Activated CD4-positive, alpha-beta T cell treated with anti-CD3 and anti-CD28 coated beads for 36 hours (primary cell): ENCODE measurements at regions of chr1 and their contacts with region 1.

Region 1: GRCh38 chr1:101282314-101283038 is 45.7 kb downstream of the S1PR1 start:
- DNase-seq: no peak
- ATAC-seq: no peak
- H3K4me3 Mint-ChIP-seq: no peak overlapping the region
- H3K27ac Mint-ChIP-seq: peak overlapping the region; percentile 95
- H3K4me1 Mint-ChIP-seq: peaks cover 93% of the 10 kb centered on the region
- H3K27me3 Mint-ChIP-seq: no peaks in the 10 kb centered on the region

Region 2: DNA sequence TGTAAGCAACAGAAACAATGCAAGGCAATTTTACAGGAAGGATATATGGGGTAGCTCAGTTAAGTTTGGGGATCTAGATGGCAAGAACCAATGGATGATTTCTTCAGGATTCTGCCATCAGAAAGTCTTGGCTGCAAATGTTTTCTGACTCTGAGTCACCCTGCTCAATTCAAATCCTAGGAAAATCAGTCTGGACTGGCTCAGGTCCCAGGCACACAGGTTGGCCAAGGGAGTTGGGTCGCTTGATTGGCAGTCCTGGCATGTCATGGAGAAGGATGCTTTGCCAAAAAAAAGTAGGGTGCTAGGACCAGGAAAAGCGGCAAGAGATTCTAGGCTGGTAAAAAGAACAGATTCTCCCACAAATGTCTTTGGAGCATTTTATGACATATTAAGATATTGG is 74.6 kb before region 1 on chr1:
- CTCF ChIA-PET with region 1: no interaction called
- POLR2A ChIA-PET with region 1: no interaction called
- intact Hi-C with region 1: no loop called
- DNase-seq: no peak
- ATAC-seq: no peak
- H3K4me3 Mint-ChIP-seq: no peak overlapping the region
- H3K27ac Mint-ChIP-seq: no peak overlapping the region
- H3K4me1 Mint-ChIP-seq: peaks cover 25% of the 10 kb centered on the region
- H3K27me3 Mint-ChIP-seq: no peaks in the 10 kb centered on the region

Region 3: GRCh38 chr1:101257500-101258325 is 24.8 kb before region 1 on chr1:
- CTCF ChIA-PET with region 1: interaction called, 7 read pairs
- POLR2A ChIA-PET with region 1: interaction called, 4 read pairs
- intact Hi-C with region 1: loop called in 1 of 2 experiments (anchors 2 kb)
- DNase-seq: peak; percentile 38
- ATAC-seq: peak; percentile 6
- H3K4me3 Mint-ChIP-seq: no peak overlapping the region
- H3K27ac Mint-ChIP-seq: peak overlapping the region; percentile 39
- H3K4me1 Mint-ChIP-seq: peaks cover 71% of the 10 kb centered on the region
- H3K27me3 Mint-ChIP-seq: no peaks in the 10 kb centered on the region

Region 4: DNA sequence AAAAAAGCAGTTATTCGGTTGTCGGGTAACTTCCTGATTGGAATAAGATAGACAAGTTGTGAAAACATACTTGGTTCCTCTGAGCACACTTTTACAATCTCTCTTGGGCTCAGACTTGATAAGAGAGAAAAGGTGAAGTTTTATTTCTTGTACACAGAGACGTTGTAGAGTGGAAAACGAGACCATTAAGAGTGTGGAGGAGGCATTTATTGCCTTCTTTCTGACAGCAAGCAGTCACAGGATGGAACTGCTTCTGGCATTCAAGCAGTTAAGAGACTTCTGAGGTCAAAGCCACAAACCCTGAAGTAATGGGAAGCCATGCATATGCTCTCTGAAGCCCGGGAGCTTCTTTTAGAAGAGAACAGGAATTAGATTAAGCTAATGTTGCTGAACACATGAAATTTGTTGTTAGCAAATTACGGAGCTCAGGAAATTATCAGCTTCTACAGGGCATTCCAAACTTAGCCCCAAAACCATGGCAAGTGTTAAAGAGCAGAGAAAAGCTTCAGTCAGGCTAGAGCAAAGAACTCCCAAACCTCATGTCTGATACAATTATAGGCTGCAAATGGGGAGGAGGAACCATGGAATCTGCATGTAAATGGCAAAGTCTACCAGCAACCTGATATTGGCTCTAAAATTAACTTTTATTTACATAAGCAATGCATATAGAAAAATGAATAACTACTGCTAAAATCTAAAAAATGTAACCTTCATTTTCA is 19.7 kb before region 1 on chr1:
- CTCF ChIA-PET with region 1: interaction called, 7 read pairs
- POLR2A ChIA-PET with region 1: interaction called, 3 read pairs
- intact Hi-C with region 1: loop called (anchors 2 kb)
- DNase-seq: no peak
- ATAC-seq: peak; percentile 40
- H3K4me3 Mint-ChIP-seq: peak overlapping the region; percentile 55
- H3K27ac Mint-ChIP-seq: peak overlapping the region; percentile 84
- H3K4me1 Mint-ChIP-seq: peaks cover 84% of the 10 kb centered on the region
- H3K27me3 Mint-ChIP-seq: no peaks in the 10 kb centered on the region

Region 5: DNA sequence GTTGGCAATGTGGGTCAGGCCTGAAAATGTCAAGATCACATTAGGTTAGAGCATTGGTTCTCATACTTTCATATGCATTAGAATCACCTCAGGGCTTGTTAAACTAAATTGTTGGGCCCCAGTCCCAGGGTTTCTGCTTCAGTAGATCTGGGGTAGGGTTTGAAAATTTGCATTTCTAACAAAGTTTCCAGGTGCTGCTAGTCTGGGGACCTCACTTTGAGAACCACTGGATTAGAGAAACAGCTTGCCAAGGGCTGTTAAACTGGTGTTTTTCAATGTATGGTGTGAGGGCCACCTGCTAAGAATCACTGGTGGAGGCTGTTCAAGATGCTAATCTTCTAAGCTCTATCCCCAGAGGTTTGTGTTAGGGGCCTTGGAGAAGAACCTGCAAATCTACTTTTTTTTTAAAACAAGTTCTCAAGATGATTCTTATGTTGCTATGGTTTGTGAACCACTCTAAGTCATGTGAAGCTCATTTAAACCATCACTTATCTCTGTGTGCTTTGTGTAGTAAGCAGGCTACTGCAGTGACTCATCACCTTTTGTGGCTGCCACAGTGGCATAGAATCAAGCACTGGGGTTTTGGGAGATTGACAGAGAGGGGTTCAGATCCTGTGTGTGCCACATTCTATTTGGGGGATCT is 106.5 kb after region 1 on chr1:
- CTCF ChIA-PET with region 1: no interaction called
- POLR2A ChIA-PET with region 1: no interaction called
- intact Hi-C with region 1: no loop called
- DNase-seq: peak; percentile 55
- ATAC-seq: peak; percentile 98
- H3K4me3 Mint-ChIP-seq: no peak overlapping the region
- H3K27ac Mint-ChIP-seq: peak overlapping the region; percentile 49
- H3K4me1 Mint-ChIP-seq: peaks cover 4% of the 10 kb centered on the region
- H3K27me3 Mint-ChIP-seq: no peaks in the 10 kb centered on the region

Region 6: GRCh38 chr1:102219463-102219862 is 937.0 kb after region 1 on chr1:
- CTCF ChIA-PET with region 1: no interaction called
- POLR2A ChIA-PET with region 1: no interaction called
- intact Hi-C with region 1: no loop called
- DNase-seq: no peak
- ATAC-seq: no peak
- H3K4me3 Mint-ChIP-seq: no peak overlapping the region
- H3K27ac Mint-ChIP-seq: no peak overlapping the region
- H3K4me1 Mint-ChIP-seq: no peaks in the 10 kb centered on the region
- H3K27me3 Mint-ChIP-seq: no peaks in the 10 kb centered on the region